PC-9 (cell line): ENCODE measurements at regions of chr3 and their contacts with region 1.

Region 1: DNA sequence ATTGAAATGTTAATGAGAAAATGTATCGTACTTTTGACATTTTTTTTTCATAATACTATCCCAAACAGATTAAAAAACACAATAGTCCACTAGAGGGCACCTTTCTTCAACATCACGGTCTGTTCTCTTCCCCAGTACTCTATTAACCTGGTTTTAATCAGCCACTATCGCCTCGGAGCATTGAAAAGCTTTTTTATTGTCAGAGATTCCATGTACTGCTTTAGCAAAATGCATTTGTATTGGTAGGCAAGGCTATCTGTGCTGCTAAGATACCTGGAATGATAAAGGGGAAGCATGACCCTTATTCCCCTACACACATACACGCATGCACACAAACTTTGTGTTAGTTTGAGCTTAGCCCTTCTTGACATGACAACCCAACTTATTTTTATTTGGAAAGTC is 160.1 kb upstream of the IL12A start:
- DNase-seq: no peak
- H3K4me3 ChIP-seq: no peak overlapping the region
- H3K27ac ChIP-seq: no peak overlapping the region
- H3K4me1 ChIP-seq: peaks cover 39% of the 10 kb centered on the region
- H3K27me3 ChIP-seq: no peaks in the 10 kb centered on the region
- CTCF ChIP-seq: peak; percentile 76

Region 2: GRCh38 chr3:159739886-159740453 is 88.6 kb before region 1 on chr3:
- CTCF ChIA-PET with region 1: no interaction called
- POLR2A ChIA-PET with region 1: no interaction called
- intact Hi-C with region 1: no loop called
- DNase-seq: no peak
- H3K4me3 ChIP-seq: no peak overlapping the region
- H3K27ac ChIP-seq: no peak overlapping the region
- H3K4me1 ChIP-seq: no peaks in the 10 kb centered on the region
- H3K27me3 ChIP-seq: no peaks in the 10 kb centered on the region
- CTCF ChIP-seq: no peak

Region 3: DNA sequence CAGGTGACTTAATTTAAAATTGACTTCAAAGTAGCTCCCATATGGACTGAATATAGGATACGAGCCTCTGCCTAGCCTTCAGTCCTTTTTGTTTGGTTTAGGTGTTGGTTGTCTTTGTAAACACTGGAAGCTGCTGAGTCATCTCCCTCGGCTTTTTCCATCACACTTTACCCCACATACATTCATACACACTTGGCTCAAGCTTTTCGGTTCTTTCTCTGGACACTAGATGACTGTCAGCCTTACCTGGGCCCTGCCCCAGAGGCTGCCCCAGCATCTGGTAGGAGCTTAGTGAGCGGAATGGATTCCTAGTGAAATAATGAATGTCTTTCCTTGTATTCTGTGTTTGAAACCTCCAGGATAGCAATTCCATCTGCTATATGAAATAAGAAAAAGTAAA is 41.4 kb before region 1 on chr3:
- CTCF ChIA-PET with region 1: no interaction called
- POLR2A ChIA-PET with region 1: no interaction called
- intact Hi-C with region 1: loop called (anchors 1 kb)
- DNase-seq: peak; percentile 82 to 98
- H3K4me3 ChIP-seq: peak overlapping the region; percentile 30; the same call in 1 of the 2 replicates
- H3K27ac ChIP-seq: peak overlapping the region; percentile 90
- H3K4me1 ChIP-seq: peaks cover 64% of the 10 kb centered on the region
- H3K27me3 ChIP-seq: no peaks in the 10 kb centered on the region
- CTCF ChIP-seq: no peak

Region 4: GRCh38 chr3:159884661-159885402 is 56.3 kb after region 1 on chr3:
- CTCF ChIA-PET with region 1: interaction called, 5 read pairs
- POLR2A ChIA-PET with region 1: no interaction called
- intact Hi-C with region 1: loop called (anchors 2 kb)
- DNase-seq: peak; percentile 15 to 45
- H3K4me3 ChIP-seq: no peak overlapping the region
- H3K27ac ChIP-seq: no peak overlapping the region
- H3K4me1 ChIP-seq: no peaks in the 10 kb centered on the region
- H3K27me3 ChIP-seq: no peaks in the 10 kb centered on the region
- CTCF ChIP-seq: peak; percentile 85

Region 5: DNA sequence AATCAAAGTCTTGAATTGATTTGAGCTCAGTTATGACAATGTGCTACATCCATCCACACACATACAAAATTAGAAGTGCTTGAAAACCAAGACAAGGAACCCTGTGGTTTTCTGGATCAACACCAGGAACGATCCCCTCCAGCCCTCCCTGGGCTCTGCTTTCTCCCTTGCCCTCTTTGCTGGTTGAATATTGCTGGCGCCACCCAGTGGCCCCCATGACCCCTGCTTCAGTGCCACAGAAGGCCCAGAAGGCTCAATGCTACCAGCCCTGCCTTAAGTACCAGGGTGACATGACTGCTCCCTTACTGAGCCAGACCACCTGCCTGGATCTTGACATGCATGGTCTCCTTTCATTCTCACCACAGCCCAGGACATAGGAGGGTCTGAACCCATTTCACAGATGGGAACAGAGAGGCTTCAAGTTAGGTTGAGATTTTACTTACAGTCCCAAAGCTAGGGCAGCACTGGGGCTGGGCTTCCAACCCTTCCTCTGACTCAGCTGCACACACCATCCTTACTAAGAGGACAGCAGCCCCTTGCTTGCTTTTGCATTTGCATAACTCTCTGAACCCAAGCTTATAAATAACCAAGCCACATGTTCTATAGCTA is 175.1 kb after region 1 on chr3:
- CTCF ChIA-PET with region 1: interaction called, 13 read pairs
- POLR2A ChIA-PET with region 1: interaction called, 4 read pairs
- intact Hi-C with region 1: loop called (anchors 1 kb)
- DNase-seq: peak in 1 of 2 experiments; percentile 65
- H3K4me3 ChIP-seq: no peak overlapping the region
- H3K27ac ChIP-seq: no peak overlapping the region
- H3K4me1 ChIP-seq: no peaks in the 10 kb centered on the region
- H3K27me3 ChIP-seq: no peaks in the 10 kb centered on the region
- CTCF ChIP-seq: peak; percentile 77

Region 6: GRCh38 chr3:160956806-160957205 is 1128.3 kb after region 1 on chr3:
- CTCF ChIA-PET with region 1: no interaction called
- POLR2A ChIA-PET with region 1: interaction called, 10 read pairs
- intact Hi-C with region 1: no loop called
- DNase-seq: no peak
- H3K4me3 ChIP-seq: no peak overlapping the region
- H3K27ac ChIP-seq: no peak overlapping the region
- H3K4me1 ChIP-seq: no peaks in the 10 kb centered on the region
- H3K27me3 ChIP-seq: no peaks in the 10 kb centered on the region
- CTCF ChIP-seq: peak; percentile 67